Activated naive CD4-positive, alpha-beta T cell treated with anti-CD3 and anti-CD28 coated beads for 36 hours (primary cell): ENCODE measurements at regions of chr15 and their contacts with region 1.

Region 1: DNA sequence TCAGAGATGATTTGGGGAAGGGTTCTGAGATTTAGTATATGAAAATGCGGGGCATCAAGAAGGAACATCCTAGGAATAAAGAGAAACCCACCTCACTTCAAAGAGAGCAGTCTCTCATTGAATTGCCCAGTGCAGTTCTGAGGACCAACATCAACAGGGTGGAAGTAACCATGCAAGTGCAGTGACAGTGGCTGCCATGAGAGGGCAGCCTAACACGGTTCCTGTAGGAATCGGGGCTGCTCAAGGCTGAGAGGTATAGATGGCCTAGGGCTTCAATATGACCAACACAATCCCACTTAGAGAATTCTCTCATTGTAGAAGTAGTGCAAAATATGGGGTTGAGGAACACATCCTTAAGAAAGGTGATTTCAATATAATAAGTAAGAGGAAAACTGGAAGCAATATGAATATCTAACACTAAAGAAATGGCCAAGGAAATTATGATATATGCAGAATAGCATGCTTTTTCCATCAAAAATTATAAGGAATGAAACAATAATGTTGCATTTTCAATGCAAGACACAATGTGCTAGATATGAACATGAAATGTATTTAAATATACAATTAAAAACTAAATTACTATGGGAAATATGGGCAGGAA is 51.1 kb upstream of the ARRDC4 start:
- DNase-seq: peak; percentile 71
- H3K4me3 Mint-ChIP-seq: no peak overlapping the region
- H3K27ac Mint-ChIP-seq: no peak overlapping the region
- H3K4me1 Mint-ChIP-seq: no peaks in the 10 kb centered on the region
- H3K27me3 Mint-ChIP-seq: peaks cover 11% of the 10 kb centered on the region

Region 2: GRCh38 chr15:98009971-98010370 is 100.6 kb after region 1 on chr15:
- CTCF ChIA-PET with region 1: no interaction called
- intact Hi-C with region 1: no loop called
- DNase-seq: no peak
- H3K4me3 Mint-ChIP-seq: no peak overlapping the region
- H3K27ac Mint-ChIP-seq: no peak overlapping the region
- H3K4me1 Mint-ChIP-seq: no peaks in the 10 kb centered on the region
- H3K27me3 Mint-ChIP-seq: peaks cover 11% of the 10 kb centered on the region

Region 3: GRCh38 chr15:98085003-98085639 is 175.7 kb after region 1 on chr15:
- CTCF ChIA-PET with region 1: interaction called, 5 read pairs
- intact Hi-C with region 1: loop called (anchors 1 kb)
- DNase-seq: peak; percentile 61
- H3K4me3 Mint-ChIP-seq: no peak overlapping the region
- H3K27ac Mint-ChIP-seq: no peak overlapping the region
- H3K4me1 Mint-ChIP-seq: no peaks in the 10 kb centered on the region
- H3K27me3 Mint-ChIP-seq: no peaks in the 10 kb centered on the region

Region 4: GRCh38 chr15:98177924-98178592 is 268.7 kb after region 1 on chr15:
- CTCF ChIA-PET with region 1: interaction called, 21 read pairs
- intact Hi-C with region 1: loop called (anchors 1 kb)
- DNase-seq: peak; percentile 49
- H3K4me3 Mint-ChIP-seq: no peak overlapping the region
- H3K27ac Mint-ChIP-seq: no peak overlapping the region
- H3K4me1 Mint-ChIP-seq: peaks cover 8% of the 10 kb centered on the region
- H3K27me3 Mint-ChIP-seq: peaks cover 24% of the 10 kb centered on the region

Region 5: GRCh38 chr15:98292442-98293240 is 383.2 kb after region 1 on chr15:
- CTCF ChIA-PET with region 1: interaction called, 4 read pairs
- intact Hi-C with region 1: loop called (anchors 5 kb)
- DNase-seq: peak; percentile 71
- H3K4me3 Mint-ChIP-seq: no peak overlapping the region
- H3K27ac Mint-ChIP-seq: no peak overlapping the region
- H3K4me1 Mint-ChIP-seq: peaks cover 6% of the 10 kb centered on the region
- H3K27me3 Mint-ChIP-seq: peaks cover 37% of the 10 kb centered on the region

Region 6: GRCh38 chr15:98428253-98428989 is 519.0 kb after region 1 on chr15:
- CTCF ChIA-PET with region 1: no interaction called
- intact Hi-C with region 1: loop called (anchors 2 kb)
- DNase-seq: peak; percentile 62
- H3K4me3 Mint-ChIP-seq: peak overlapping the region; percentile 45
- H3K27ac Mint-ChIP-seq: no peak overlapping the region
- H3K4me1 Mint-ChIP-seq: peaks cover 3% of the 10 kb centered on the region
- H3K27me3 Mint-ChIP-seq: peaks cover 51% of the 10 kb centered on the region